Right ventricle myocardium inferior (tissue), 1 donor: ENCODE measurements at regions of chr22 and their contacts with region 1.

Region 1: DNA sequence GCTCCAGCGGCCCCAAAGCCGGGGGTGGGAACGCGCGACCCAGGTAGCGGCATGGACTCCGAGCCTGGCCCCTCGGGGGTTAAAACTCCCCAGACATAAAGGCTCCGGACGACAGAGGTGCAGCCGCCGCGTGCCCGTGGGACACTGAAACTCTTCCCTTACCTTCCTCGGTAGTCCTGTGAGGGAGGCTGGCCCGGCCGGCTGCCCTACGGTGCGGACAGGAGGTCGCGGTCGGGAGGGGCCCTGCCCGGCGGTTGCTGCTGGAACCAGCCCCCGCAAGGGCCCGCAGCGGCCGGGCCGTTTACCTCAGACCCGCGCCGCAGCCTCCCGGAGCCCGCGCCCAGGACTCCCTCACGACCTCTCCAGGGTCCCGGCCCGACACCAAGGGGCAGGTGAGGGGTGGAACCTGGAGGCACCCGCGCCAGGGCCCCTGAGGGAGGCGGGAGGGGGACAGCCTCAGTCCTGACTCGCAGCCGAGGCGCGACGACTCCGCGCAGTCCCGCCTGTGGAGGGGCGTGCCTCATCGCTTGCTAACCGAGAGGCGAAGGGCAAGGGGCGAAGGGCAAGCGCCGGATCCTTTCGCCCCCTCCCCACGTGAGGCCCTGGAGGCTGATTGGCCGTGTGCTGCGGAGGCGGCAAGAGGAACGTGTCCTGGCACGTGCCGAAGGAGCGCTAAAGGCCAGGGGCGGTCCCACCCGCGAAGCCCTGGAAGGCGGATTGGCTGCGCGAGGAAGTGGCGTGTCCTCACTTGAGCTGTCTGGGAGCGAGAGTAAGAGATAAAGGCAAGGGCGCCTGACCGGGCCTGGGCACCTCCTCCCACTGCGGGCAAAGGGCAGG is at the start of gene UPB1:
- DNase-seq: no peak
- ATAC-seq: peak; percentile 27
- total RNA-seq, gene UPB1: 1.3 TPM

Region 2: DNA sequence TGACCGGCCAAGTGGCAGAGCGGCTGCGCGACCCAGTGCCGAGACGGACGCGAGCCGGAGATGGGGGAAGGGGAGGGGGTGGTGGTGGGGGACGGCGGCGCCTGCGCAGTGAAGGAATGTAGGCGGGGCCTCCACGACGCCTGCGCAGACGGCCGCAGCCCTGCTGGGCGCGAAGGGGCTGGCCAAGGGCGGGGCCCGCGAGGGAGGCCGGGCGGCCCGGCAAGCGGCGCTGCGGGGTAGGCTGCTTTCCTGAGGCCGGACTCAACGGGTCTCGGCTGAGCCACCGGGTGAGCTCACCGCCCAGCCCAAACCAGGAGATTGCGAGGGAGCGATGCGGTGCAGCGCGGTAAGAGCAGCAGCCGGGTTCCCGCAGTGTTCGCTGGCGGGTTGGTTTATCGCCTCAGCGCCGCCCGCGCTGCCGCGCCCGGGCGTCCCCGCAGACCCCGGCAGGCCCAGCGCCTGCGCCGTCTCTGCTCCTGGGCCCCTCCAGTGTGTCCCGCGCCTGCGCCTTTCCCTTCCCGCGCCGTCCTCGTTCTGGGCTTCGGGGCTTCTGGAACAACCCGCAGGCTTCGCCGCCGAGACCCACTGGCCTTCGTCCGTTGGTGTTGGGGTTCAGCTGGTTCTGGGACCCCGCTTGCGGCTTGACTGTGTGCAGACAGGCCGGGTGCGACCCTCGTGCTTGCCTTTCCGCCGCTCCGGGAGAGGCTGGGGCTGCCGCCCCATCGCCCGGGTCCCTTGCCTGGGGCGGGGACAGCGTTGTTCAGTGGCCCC is 223.9 kb before region 1 on chr22 and contains the start of gene SPECC1L:
- intact Hi-C with region 1: loop called (anchors 5 kb)
- DNase-seq: peak; percentile 97
- ATAC-seq: peak; percentile 98
- total RNA-seq, gene SPECC1L: 45.7 TPM